Activated B cell treated with CpG ODN at 0.5 μM for 24 hours (primary cell): ENCODE measurements at regions of chrX and their contacts with region 1.

Region 1: DNA sequence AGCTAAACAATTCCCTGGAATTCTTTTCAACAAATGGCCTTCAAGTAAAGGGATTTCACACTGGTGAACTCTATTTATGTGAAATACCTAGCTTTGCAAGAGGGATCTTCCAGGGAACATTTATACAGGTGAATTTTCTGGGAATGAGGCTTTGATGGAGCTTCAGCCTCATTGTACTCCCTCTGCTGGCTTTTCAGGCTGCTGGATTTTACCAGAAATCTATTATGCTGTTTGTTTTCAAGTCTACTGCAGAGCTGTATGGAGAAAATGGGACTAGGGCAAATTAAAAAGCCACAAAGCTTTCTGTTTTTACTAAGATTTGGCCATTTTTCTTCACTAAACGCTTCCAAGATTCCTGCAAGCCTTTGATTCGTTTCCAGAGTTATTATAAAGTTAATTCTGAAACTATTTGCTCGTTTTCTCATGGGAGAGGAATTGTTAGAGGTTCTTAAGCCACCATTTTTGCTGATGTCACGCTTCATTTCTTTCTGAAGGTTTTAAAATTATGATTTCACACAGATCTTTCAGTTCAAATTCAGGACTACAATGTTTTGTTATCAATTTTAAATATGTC is 31.6 kb downstream of the KDM6A start:
- DNase-seq: no peak
- ATAC-seq: no peak
- H3K4me3 Mint-ChIP-seq: no peak overlapping the region
- H3K27ac Mint-ChIP-seq: no peak overlapping the region
- H3K4me1 Mint-ChIP-seq: peaks cover 80% of the 10 kb centered on the region
- H3K27me3 Mint-ChIP-seq: no peaks in the 10 kb centered on the region
- CTCF ChIP-seq: no peak

Region 2: DNA sequence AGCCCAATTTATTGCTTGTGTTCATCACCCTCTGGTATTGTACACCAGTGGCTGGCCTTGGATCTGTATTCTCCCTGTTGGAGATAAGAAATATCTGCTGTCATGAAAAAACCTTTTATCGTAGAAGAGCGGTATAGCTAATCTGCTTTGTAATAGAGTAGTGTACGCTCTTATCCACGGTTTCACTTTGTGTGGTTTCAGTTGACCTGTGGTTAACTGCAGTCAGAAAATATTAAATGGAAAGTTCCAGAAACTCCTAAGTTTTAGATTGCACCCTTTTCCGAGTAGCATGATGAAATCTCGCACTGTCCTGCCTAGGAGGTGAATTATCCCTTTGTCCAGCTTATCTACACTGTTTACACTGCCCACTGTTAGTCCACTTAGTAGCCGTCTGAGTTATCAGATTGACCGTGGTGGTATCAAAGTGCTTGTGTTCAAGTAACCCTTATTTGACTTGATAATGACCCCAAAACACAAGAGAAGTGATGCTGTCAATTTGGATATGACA is 10.8 kb after region 1 on chrX:
- CTCF ChIA-PET with region 1: no interaction called
- POLR2A ChIA-PET with region 1: no interaction called
- intact Hi-C with region 1: loop called (anchors 2 kb)
- DNase-seq: no peak
- ATAC-seq: no peak
- H3K4me3 Mint-ChIP-seq: no peak overlapping the region
- H3K27ac Mint-ChIP-seq: no peak overlapping the region
- H3K4me1 Mint-ChIP-seq: peaks cover 50% of the 10 kb centered on the region
- H3K27me3 Mint-ChIP-seq: no peaks in the 10 kb centered on the region
- CTCF ChIP-seq: no peak